Activated naive CD4-positive, alpha-beta T cell treated with anti-CD3 and anti-CD28 coated beads for 36 hours (primary cell): ENCODE measurements at regions of chr11 and their contacts with region 1.

Region 1: DNA sequence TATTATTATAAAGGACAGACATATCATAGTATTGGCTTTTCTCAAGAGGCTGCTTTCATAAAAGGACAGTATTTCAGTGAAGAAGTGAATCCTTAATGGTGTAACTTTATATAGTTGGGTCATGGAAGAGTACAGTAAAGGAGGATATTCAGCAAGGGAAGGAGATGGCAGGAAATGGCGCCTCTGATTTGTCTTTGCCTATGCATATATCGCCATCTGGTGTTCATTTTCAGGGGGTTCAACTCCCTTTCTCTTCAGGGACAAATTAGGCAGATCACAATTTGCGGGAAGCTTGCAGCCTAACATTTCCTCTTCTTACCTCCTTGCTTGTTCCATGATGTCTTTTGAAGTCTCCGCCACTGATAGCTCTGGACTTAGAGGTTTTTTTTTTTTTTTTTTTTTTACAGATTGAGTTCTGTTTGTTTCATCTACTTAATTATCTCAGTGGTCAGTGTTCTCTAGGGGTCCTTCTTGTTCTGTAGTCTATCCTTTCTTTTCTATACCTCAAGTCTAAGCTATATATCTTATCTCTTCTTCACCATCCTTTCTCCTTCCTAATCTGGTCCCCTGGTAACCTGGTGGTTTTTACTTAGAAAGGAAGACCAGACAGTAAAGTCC is 21.8 kb upstream of the RRM1 start:
- DNase-seq: peak; percentile 67
- H3K4me3 Mint-ChIP-seq: no peak overlapping the region
- H3K27ac Mint-ChIP-seq: peak overlapping the region; percentile 63
- H3K4me1 Mint-ChIP-seq: peaks cover 47% of the 10 kb centered on the region
- H3K27me3 Mint-ChIP-seq: no peaks in the 10 kb centered on the region

Region 2: GRCh38 chr11:3807909-3808860 is 264.6 kb before region 1 on chr11 and contains the start of gene PGAP2:
- CTCF ChIA-PET with region 1: interaction called, 17 read pairs
- intact Hi-C with region 1: no loop called
- DNase-seq: peak; percentile 81
- H3K4me3 Mint-ChIP-seq: peak within 1 kb of the TSS; percentile 97
- H3K27ac Mint-ChIP-seq: peak within 1 kb of the TSS; percentile 91
- H3K4me1 Mint-ChIP-seq: peaks cover 18% of the 10 kb centered on the region
- H3K27me3 Mint-ChIP-seq: no peaks in the 10 kb centered on the region
- total RNA-seq, gene PGAP2: 38.9 to 40.8 TPM

Region 3: GRCh38 chr11:3831378-3832239 is 241.2 kb before region 1 on chr11:
- CTCF ChIA-PET with region 1: interaction called, 573 read pairs
- intact Hi-C with region 1: no loop called
- DNase-seq: no peak
- H3K4me3 Mint-ChIP-seq: peak overlapping the region; percentile 0
- H3K27ac Mint-ChIP-seq: peak overlapping the region; percentile 86
- H3K4me1 Mint-ChIP-seq: peaks cover 70% of the 10 kb centered on the region
- H3K27me3 Mint-ChIP-seq: no peaks in the 10 kb centered on the region

Region 4: DNA sequence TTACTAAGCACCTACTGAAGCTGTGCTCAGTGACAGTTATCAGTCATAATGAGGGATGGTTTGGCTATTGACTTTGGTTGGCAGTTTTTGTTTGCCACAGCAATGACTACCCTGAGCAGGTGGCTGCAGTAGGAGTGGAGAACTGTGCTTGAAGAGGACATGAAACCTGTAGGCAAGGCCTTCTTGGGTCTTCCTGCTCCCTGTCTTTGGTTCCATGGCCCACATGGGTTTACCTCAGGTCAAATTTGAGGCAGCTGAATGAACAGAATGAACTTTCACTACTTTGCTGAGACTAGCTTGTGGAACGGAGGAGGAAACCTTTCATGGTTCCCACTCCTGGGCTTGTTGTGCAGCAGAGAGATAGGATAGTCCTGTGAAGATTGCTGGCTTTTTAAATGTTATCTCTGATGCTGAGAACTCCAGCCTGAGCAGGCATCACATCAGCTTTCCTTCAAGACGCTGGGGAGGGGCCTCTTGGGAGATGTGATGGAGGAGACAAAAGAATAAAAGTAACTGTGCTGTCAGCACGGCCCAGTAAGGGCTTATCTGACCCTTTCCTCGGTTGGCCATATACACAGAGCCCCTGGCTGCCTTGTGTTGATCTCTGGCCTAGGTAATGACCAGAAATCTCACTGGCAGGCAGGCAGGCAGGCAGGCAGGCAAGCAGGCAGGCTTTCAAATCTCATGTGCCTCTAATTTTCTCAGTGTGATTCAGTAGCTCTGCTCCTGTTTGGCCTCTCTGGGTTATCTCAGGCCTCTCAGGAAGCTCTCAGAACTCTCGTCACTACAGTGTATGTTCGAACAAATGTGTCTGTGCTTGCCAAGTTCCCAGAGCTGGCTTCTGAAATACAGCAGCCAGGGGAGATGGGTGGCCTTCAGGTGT is 205.3 kb before region 1 on chr11:
- CTCF ChIA-PET with region 1: interaction called, 10 read pairs
- intact Hi-C with region 1: no loop called
- DNase-seq: peak; percentile 70
- H3K4me3 Mint-ChIP-seq: peak overlapping the region; percentile 36
- H3K27ac Mint-ChIP-seq: peak overlapping the region; percentile 87
- H3K4me1 Mint-ChIP-seq: peaks cover 81% of the 10 kb centered on the region
- H3K27me3 Mint-ChIP-seq: no peaks in the 10 kb centered on the region

Region 5: DNA sequence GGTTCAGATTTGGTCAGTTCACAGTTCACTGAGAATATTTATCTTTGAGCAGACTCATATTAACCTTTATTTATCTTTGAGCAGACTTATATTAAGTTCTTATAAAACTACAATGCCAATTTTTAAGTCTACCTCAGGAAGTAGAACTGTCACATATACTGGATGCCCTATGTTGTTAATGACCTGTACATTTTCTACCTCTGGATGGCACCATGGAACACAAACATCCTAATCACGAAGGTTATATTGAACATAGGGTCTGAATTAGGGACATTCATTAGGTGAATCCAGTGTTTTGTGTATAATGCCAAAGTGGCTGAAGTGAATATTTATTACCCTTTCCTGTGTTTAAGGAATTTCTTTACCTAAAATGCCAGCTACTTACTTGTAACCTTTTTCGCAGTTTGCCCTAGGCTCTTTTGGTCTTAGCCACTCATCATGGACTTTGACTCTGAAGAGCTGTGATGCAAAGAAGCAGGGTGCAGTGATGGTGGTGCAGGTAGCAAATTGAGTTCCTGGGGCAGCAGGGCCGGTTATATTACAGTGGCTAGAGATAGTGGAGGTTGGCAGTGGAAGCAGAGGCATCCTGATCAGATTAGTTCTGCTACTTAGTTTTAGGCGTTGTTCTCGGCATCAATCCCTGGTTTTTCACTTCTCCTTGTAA is 145.5 kb before region 1 on chr11:
- CTCF ChIA-PET with region 1: interaction called, 29 read pairs
- intact Hi-C with region 1: loop called (anchors 2 kb)
- DNase-seq: no peak
- H3K4me3 Mint-ChIP-seq: no peak overlapping the region
- H3K27ac Mint-ChIP-seq: no peak overlapping the region
- H3K4me1 Mint-ChIP-seq: peaks cover 18% of the 10 kb centered on the region
- H3K27me3 Mint-ChIP-seq: no peaks in the 10 kb centered on the region

Region 6: DNA sequence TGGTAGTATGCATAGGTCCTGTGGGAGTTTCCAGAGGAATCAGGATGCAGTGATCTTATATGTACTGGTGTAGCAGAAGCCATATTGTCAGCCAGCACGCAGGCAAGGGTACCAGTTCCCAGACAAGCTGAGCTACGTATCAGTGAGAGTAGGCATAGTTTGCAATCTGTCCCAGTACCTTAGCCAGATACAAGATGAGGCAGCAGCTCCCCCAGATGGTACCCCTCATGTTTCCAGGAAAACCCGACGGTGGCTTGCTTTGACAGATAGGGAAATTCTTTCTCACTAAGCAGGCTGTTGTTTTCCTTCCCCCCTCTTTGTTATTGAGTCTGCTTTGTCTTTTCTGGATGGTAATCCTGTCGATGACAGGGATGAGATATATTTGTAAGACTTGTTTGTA is 87.9 kb before region 1 on chr11:
- CTCF ChIA-PET with region 1: interaction called, 16 read pairs
- intact Hi-C with region 1: loop called (anchors 1 kb)
- DNase-seq: peak; percentile 80
- H3K4me3 Mint-ChIP-seq: no peak overlapping the region
- H3K27ac Mint-ChIP-seq: peak overlapping the region; percentile 55
- H3K4me1 Mint-ChIP-seq: peaks cover 74% of the 10 kb centered on the region
- H3K27me3 Mint-ChIP-seq: no peaks in the 10 kb centered on the region

Region 7: DNA sequence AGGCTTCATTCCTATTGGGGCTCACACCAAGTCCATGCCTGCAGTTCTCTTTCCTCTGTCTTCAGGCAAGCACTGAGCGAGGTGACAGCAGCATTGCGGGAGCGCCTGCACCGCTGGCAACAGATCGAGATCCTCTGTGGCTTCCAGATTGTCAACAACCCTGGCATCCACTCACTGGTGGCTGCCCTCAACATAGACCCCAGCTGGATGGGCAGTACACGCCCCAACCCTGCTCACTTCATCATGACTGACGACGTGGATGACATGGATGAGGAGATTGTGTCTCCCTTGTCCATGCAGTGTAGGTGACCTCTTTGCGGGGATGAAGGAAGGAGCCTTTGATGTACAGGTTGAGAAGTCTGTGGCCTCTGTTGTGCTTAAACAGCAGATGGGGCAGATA is 10.4 kb after region 1 on chr11:
- CTCF ChIA-PET with region 1: interaction called, 31 read pairs
- intact Hi-C with region 1: no loop called
- DNase-seq: no peak
- H3K4me3 Mint-ChIP-seq: no peak overlapping the region
- H3K27ac Mint-ChIP-seq: no peak overlapping the region
- H3K4me1 Mint-ChIP-seq: peaks cover 18% of the 10 kb centered on the region
- H3K27me3 Mint-ChIP-seq: no peaks in the 10 kb centered on the region